Activated CD8-positive, alpha-beta T cell treated with anti-CD3 and anti-CD28 coated beads, Interleukin-2, amount 10 ng/mL, durations not matched to agents 7 days and 5 days (primary cell): ENCODE measurements at regions of chr1 and their contacts with region 1.

Region 1: DNA sequence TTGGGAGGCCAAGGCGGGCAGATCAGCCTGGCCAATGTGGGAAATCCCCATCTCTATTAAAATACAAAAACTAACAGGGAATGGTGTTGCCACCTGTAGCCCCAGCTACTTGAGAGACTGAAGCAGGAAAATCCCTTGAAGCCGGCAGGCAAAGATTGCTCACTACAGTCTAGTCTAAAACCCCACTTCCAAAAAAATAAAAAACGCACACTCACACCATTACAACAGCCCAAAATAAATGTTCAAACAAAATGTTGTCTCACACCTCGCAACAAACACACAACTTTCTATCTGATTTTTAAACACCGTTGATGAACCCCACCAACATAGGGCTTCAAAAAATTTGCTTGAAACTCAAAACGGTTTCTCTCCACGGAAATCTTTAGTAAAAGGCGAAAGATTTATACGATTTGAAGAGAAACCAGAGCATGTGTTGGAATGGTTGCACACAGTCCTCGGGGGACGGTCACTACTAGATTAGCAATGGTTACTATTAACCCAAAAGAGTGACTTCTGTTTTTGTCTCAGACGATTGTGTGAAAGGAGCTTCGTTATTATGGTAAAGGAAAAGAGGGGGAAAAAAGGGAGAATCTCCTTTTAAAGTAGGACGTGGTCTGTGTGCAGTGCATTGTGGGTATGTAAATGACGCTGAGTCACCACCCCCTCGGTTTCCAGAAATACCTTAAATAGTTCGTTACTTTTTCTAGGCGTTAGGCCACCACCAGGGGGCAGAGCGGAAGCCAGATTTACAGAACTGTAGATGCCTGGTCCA is at the start of gene RNU5D-1:
- DNase-seq: peak; percentile 97
- ATAC-seq: peak; percentile 82
- H3K4me3 Mint-ChIP-seq: peak within 1 kb of the TSS; percentile 64
- H3K27ac Mint-ChIP-seq: peak within 1 kb of the TSS; percentile 99
- H3K4me1 Mint-ChIP-seq: peaks cover 45% of the 10 kb centered on the region
- H3K27me3 Mint-ChIP-seq: no peaks in the 10 kb centered on the region
- total RNA-seq, gene RNU5D-1: not detected

Region 2: GRCh38 chr1:44485229-44485933 is 245.5 kb before region 1 on chr1:
- CTCF ChIA-PET with region 1: no interaction called
- POLR2A ChIA-PET with region 1: no interaction called
- DNase-seq: no peak
- ATAC-seq: no peak
- H3K4me3 Mint-ChIP-seq: no peak overlapping the region
- H3K27ac Mint-ChIP-seq: no peak overlapping the region
- H3K4me1 Mint-ChIP-seq: no peaks in the 10 kb centered on the region
- H3K27me3 Mint-ChIP-seq: peaks cover 25% of the 10 kb centered on the region

Region 3: GRCh38 chr1:44619261-44619900 is 111.5 kb before region 1 on chr1:
- CTCF ChIA-PET with region 1: no interaction called
- POLR2A ChIA-PET with region 1: no interaction called
- DNase-seq: no peak
- ATAC-seq: no peak
- H3K4me3 Mint-ChIP-seq: no peak overlapping the region
- H3K27ac Mint-ChIP-seq: no peak overlapping the region
- H3K4me1 Mint-ChIP-seq: no peaks in the 10 kb centered on the region
- H3K27me3 Mint-ChIP-seq: peaks cover 2% of the 10 kb centered on the region

Region 4: GRCh38 chr1:44684525-44684924 is 46.4 kb before region 1 on chr1:
- CTCF ChIA-PET with region 1: no interaction called
- POLR2A ChIA-PET with region 1: no interaction called
- DNase-seq: no peak
- ATAC-seq: peak; percentile 39
- H3K4me3 Mint-ChIP-seq: no peak overlapping the region
- H3K27ac Mint-ChIP-seq: no peak overlapping the region
- H3K4me1 Mint-ChIP-seq: peaks cover 8% of the 10 kb centered on the region
- H3K27me3 Mint-ChIP-seq: peaks cover 2% of the 10 kb centered on the region

Region 5: DNA sequence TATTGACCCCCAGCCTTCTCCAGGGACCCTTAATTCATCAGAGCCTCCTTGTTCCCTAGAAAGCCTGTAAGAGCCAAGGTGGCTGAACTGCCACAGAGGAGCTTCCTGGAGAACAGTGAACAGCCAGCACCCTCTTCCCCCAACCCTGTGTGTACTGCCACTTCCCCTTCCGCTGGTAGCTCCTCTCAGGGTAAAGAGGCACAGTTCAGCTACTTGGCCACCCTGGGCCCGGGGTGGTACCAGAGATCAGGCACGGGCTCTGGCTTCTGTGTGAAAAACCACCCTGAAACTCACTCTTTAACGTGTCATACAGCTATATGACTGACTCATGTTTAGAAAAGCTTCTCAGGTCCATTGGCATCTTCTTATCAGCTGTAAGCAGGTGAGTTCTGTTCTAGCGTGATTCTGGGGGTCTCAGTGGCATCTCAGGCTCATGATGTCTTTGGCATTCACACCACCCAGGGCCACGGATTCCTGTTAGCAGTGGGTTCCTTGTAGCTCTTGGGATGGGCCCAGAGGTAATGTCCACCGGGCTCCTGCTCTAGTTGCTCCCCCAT is 34.1 kb before region 1 on chr1:
- CTCF ChIA-PET with region 1: interaction called, 10 read pairs
- POLR2A ChIA-PET with region 1: interaction called, 10 read pairs
- DNase-seq: peak; percentile 71
- ATAC-seq: peak; percentile 94
- H3K4me3 Mint-ChIP-seq: peak overlapping the region; percentile 42
- H3K27ac Mint-ChIP-seq: peak overlapping the region; percentile 89
- H3K4me1 Mint-ChIP-seq: peaks cover 31% of the 10 kb centered on the region
- H3K27me3 Mint-ChIP-seq: no peaks in the 10 kb centered on the region

Region 6: GRCh38 chr1:44759077-44759476 is 28.1 kb after region 1 on chr1:
- CTCF ChIA-PET with region 1: interaction called, 5 read pairs
- POLR2A ChIA-PET with region 1: interaction called, 21 read pairs
- DNase-seq: no peak
- ATAC-seq: no peak
- H3K4me3 Mint-ChIP-seq: no peak overlapping the region
- H3K27ac Mint-ChIP-seq: no peak overlapping the region
- H3K4me1 Mint-ChIP-seq: peaks cover 20% of the 10 kb centered on the region
- H3K27me3 Mint-ChIP-seq: no peaks in the 10 kb centered on the region

Region 7: DNA sequence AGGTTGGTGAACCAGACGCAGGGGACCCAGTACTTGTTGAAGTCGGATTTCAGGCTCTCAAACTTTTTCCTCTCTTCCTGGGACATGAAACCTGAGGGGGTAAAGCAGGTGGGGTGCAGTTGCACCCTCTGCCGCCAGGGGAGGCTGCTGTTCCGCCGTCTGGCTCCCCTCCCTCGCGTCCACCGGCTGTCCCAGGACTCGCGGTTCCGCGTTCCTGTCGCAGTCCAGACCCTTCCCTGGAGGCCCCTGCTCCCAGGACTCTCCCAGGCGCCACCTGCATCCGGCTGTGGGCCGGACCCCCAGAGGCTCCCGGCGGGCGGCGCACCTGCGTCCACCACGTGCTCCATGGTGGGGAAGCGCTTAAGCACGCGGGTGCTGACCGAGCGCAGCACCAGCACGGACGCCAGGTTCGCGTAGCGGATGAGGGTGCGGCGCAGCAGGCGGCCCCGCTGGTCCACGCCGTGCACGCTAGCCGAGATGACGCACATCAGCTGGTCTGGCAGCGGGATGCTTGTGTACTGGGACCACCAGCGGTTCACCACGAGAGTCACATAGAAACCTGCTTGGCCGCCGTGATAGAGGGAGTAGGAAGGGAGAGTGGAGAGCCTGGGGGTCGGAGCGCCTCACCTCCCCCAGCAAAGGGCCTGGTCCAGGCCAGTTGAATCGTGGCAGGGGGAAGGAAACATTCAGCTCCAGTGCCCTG is 55.4 kb after region 1 on chr1:
- CTCF ChIA-PET with region 1: interaction called, 20 read pairs
- POLR2A ChIA-PET with region 1: interaction called, 76 read pairs
- DNase-seq: peak; percentile 82
- ATAC-seq: peak; percentile 64
- H3K4me3 Mint-ChIP-seq: peak overlapping the region; percentile 64
- H3K27ac Mint-ChIP-seq: peak overlapping the region; percentile 74
- H3K4me1 Mint-ChIP-seq: peaks cover 42% of the 10 kb centered on the region
- H3K27me3 Mint-ChIP-seq: no peaks in the 10 kb centered on the region

Region 8: GRCh38 chr1:44807262-44808062 is 76.5 kb after region 1 on chr1 and contains the start of gene DYNLT4:
- CTCF ChIA-PET with region 1: interaction called, 13 read pairs
- POLR2A ChIA-PET with region 1: interaction called, 97 read pairs
- DNase-seq: peak; percentile 94
- ATAC-seq: peak; percentile 52
- H3K4me3 Mint-ChIP-seq: peak within 1 kb of the TSS; percentile 65
- H3K27ac Mint-ChIP-seq: peak within 1 kb of the TSS; percentile 100
- H3K4me1 Mint-ChIP-seq: peaks cover 86% of the 10 kb centered on the region
- H3K27me3 Mint-ChIP-seq: no peaks in the 10 kb centered on the region
- total RNA-seq, gene DYNLT4: 1.8 to 2.3 TPM

Region 9: DNA sequence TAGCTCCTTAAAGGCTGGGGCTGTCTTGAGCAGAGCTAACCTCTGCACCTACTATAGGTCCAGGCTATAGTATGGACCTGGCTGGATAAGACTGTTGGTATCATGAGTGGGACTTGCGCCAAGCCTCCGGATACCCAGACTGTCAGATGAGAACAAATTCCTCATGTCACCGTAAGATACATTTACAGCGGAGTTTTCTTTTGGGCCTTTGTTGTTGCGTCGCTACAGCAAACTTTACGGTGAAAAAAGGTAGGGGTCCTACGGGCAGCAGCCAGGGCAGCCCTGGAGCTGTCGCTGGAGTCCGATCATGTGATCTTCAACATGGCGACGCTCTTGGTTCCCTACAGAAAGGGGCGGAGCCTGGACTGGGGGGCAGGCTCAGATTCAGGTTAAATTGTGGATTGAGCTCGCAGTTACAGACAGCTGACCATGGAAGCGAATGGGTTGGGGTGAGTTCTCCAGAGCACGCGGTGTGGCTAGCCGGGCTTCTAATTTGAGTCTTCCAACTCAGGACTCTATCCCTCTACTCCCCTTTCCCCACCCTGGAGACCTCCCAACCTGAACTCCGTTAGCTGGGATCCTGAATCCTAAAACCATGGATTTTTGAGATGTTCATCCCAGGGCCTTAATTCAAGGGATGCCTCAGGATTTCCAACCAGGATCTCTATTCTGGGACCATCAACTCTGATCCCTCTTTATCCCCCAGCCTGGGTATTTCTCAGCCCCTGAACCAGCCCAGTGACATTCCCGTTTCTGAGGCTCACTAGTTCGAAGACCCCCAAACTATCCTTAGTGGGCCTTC is 281.1 kb after region 1 on chr1 and contains the start of gene UROD:
- CTCF ChIA-PET with region 1: interaction called, 4 read pairs
- POLR2A ChIA-PET with region 1: interaction called, 59 read pairs
- DNase-seq: peak; percentile 96
- ATAC-seq: peak; percentile 80
- H3K4me3 Mint-ChIP-seq: peak within 1 kb of the TSS; percentile 75
- H3K27ac Mint-ChIP-seq: peak within 1 kb of the TSS; percentile 81
- H3K4me1 Mint-ChIP-seq: peaks cover 42% of the 10 kb centered on the region
- H3K27me3 Mint-ChIP-seq: no peaks in the 10 kb centered on the region
- total RNA-seq, gene UROD: 74.7 to 76.4 TPM